Transverse colon (tissue), 4 donors: ENCODE measurements at regions of chr7 and their contacts with region 1.

Region 1: DNA sequence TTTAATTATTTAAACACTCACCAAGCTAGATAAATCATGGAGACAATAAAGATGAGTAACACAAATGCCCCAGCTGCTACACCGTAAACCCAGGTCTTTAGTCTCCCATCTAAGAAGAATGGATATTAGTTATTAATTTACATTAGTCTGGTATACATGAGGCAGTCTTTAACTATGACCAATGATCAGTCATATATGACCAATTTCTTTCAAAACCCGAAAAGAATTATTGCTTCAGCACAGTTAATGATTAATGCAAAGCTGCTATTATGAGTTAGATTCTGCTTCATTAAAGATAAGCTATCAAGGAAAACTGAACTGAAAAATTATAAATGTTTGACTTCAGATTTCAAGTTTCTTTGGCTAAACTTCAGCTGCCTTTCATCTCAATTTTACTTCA is 402.9 kb downstream of the PHF14 start:
- DNase-seq: no peak
- H3K4me3 ChIP-seq: no peak overlapping the region
- H3K27ac ChIP-seq: no peak overlapping the region
- H3K4me1 ChIP-seq: no peaks in the 10 kb centered on the region
- H3K27me3 ChIP-seq: no peaks in the 10 kb centered on the region
- CTCF ChIP-seq: no peak
- EP300 ChIP-seq: no peak
- POLR2A ChIP-seq: no peak

Region 2: GRCh38 chr7:11486271-11486670 is 109.7 kb after region 1 on chr7:
- in situ Hi-C with region 1: loop called in 1 of 4 experiments (anchors 25 kb)
- intact Hi-C with region 1: no loop called
- DNase-seq: no peak
- H3K4me3 ChIP-seq: no peak overlapping the region
- H3K27ac ChIP-seq: no peak overlapping the region
- H3K4me1 ChIP-seq: no peaks in the 10 kb centered on the region
- H3K27me3 ChIP-seq: no peaks in the 10 kb centered on the region
- CTCF ChIP-seq: no peak
- EP300 ChIP-seq: no peak
- POLR2A ChIP-seq: no peak

Region 3: DNA sequence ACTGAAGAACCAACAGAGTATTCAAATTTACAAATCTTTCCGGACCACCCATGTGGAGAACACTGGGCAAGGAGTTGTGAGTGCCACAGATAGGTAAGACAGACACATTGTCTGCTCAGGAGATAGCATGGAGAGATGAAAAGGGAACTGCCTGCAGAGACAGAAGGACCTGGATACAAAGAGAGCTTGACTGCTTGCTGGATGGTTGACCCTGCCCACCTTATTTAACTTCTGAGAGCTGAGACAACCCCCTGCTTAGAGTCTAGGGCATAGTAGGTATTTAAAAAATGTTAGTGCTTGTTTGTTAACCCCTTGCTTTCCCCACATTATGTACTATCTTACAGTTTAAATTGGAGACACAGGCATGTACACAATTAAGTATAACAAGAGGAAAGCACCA is 141.3 kb after region 1 on chr7:
- in situ Hi-C with region 1: no loop called
- intact Hi-C with region 1: no loop called
- DNase-seq: no peak
- H3K4me3 ChIP-seq: no peak overlapping the region
- H3K27ac ChIP-seq: no peak overlapping the region
- H3K4me1 ChIP-seq: no peaks in the 10 kb centered on the region
- H3K27me3 ChIP-seq: no peaks in the 10 kb centered on the region
- CTCF ChIP-seq: no peak
- EP300 ChIP-seq: no peak
- POLR2A ChIP-seq: no peak